Caco-2 (cell line): ENCODE measurements at regions of chr10 and their contacts with region 1.

Region 1: GRCh38 chr10:129888784-129889616 is 75.1 kb downstream of the EBF3 start:
- DNase-seq: peak; percentile 57 to 73
- H3K4me3 ChIP-seq: no peak overlapping the region
- H3K4me3 Mint-ChIP-seq: no peak overlapping the region
- H3K27ac Mint-ChIP-seq: no peak overlapping the region
- H3K4me1 ChIP-seq: no peaks in the 10 kb centered on the region
- H3K4me1 Mint-ChIP-seq: no peaks in the 10 kb centered on the region
- H3K27me3 ChIP-seq: no peaks in the 10 kb centered on the region; the same call in 1 of the 2 replicates
- H3K27me3 Mint-ChIP-seq: peaks cover 3% of the 10 kb centered on the region
- CTCF ChIP-seq: peak; percentile 84 to 91

Region 2: GRCh38 chr10:129839285-129840195 is 49.5 kb before region 1 on chr10:
- CTCF ChIA-PET with region 1: interaction called, 14 read pairs
- POLR2A ChIA-PET with region 1: no interaction called
- intact Hi-C with region 1: no loop called
- DNase-seq: no peak
- H3K4me3 ChIP-seq: no peak overlapping the region
- H3K4me3 Mint-ChIP-seq: no peak overlapping the region
- H3K27ac Mint-ChIP-seq: no peak overlapping the region
- H3K4me1 ChIP-seq: no peaks in the 10 kb centered on the region
- H3K4me1 Mint-ChIP-seq: no peaks in the 10 kb centered on the region
- H3K27me3 ChIP-seq: peaks cover 2% of the 10 kb centered on the region; the same call in 1 of the 2 replicates
- H3K27me3 Mint-ChIP-seq: peaks cover 5% of the 10 kb centered on the region
- CTCF ChIP-seq: no peak

Region 3: DNA sequence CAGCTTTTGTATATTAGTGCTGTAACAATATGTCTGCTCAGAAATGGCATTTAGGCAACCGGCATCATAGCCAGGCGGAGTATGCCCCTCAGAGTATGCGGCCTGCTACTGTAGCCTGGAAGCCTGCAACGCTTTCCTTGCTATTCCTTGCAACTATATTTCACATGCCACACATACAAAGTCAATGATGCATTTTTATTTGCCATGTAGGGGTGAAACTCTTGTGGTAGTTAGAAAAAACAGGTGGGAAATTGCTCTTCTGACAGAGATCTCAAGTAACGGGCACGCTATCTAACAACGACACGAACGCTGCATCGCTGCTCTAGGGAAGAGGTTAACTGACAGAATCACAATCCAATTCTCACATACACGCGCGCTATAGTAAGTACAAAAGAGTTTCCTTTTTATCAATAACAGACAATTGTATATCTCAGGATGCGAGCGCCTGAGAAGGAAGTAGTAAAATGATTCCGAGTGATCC is 69.2 kb after region 1 on chr10:
- CTCF ChIA-PET with region 1: interaction called, 5 read pairs
- POLR2A ChIA-PET with region 1: no interaction called
- intact Hi-C with region 1: loop called (anchors 5 kb)
- DNase-seq: no peak
- H3K4me3 ChIP-seq: no peak overlapping the region
- H3K4me3 Mint-ChIP-seq: peak overlapping the region; percentile 42
- H3K27ac Mint-ChIP-seq: no peak overlapping the region
- H3K4me1 ChIP-seq: peaks cover 30% of the 10 kb centered on the region
- H3K4me1 Mint-ChIP-seq: no peaks in the 10 kb centered on the region
- H3K27me3 ChIP-seq: peaks cover 4% of the 10 kb centered on the region; the same call in 1 of the 2 replicates
- H3K27me3 Mint-ChIP-seq: peaks cover 26% of the 10 kb centered on the region
- CTCF ChIP-seq: no peak

Region 4: DNA sequence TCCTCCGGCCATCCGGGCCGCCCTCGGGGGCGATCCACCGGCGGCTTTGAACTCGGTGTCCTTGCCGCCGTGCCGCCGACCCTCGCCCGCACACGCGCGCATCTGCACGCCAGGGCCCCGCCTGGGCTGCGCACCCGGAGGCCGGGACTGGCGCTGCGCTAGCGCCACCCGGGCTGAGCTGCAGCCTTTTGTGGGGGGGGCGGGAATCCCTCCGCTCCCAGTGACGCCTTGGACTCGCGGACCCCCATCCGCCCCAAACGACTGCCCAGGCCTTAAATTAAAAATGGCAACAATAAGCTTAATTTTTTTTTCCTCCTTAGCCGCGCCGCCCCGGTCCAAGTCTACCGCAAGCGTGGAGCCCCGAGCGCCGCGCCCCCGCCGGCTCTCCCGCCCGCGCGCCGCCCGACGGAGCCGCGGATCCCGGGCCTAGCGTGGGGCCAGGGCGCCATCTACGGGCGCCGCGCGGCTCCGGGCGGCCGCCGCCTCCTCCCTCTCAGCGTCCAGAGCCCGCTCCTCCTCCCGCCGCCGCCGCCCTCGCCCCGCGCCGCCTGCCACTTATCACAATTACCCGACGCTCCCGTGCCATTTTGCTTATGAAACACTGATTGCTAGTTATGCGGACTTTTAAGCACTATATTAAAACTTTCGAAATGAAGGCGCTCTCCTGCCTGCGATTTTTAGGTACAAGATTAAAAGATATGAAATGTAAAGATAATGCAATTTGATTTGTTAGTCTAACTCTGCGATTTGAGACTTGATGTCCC is 82.6 kb after region 1 on chr10:
- CTCF ChIA-PET with region 1: interaction called, 14 read pairs
- POLR2A ChIA-PET with region 1: no interaction called
- intact Hi-C with region 1: loop called (anchors 1 kb)
- DNase-seq: peak in 1 of 2 experiments; percentile 80
- H3K4me3 ChIP-seq: peak overlapping the region; percentile 52
- H3K4me3 Mint-ChIP-seq: peak overlapping the region; percentile 52
- H3K27ac Mint-ChIP-seq: no peak overlapping the region
- H3K4me1 ChIP-seq: peaks cover 11% of the 10 kb centered on the region; the same call in 1 of the 2 replicates
- H3K4me1 Mint-ChIP-seq: no peaks in the 10 kb centered on the region
- H3K27me3 ChIP-seq: 0 out of 2 replicates have a peak, but pooled peaks cover 1% of the 10 kb centered on the region
- H3K27me3 Mint-ChIP-seq: peaks cover 19% of the 10 kb centered on the region
- CTCF ChIP-seq: peak; percentile 50